ENCODE measurements at regions of chr9 and their contacts with region 1.

Region 1: GRCh38 chr9:115944166-115944948 is 209.2 kb upstream of the PAPPA start:
- DNase-seq: peak; percentile 99
- H3K4me3 ChIP-seq: no peak overlapping the region
- H3K27ac ChIP-seq: peak overlapping the region; percentile 96
- H3K27me3 ChIP-seq: no peaks in the 10 kb centered on the region
- CTCF ChIP-seq: no peak

Region 2: DNA sequence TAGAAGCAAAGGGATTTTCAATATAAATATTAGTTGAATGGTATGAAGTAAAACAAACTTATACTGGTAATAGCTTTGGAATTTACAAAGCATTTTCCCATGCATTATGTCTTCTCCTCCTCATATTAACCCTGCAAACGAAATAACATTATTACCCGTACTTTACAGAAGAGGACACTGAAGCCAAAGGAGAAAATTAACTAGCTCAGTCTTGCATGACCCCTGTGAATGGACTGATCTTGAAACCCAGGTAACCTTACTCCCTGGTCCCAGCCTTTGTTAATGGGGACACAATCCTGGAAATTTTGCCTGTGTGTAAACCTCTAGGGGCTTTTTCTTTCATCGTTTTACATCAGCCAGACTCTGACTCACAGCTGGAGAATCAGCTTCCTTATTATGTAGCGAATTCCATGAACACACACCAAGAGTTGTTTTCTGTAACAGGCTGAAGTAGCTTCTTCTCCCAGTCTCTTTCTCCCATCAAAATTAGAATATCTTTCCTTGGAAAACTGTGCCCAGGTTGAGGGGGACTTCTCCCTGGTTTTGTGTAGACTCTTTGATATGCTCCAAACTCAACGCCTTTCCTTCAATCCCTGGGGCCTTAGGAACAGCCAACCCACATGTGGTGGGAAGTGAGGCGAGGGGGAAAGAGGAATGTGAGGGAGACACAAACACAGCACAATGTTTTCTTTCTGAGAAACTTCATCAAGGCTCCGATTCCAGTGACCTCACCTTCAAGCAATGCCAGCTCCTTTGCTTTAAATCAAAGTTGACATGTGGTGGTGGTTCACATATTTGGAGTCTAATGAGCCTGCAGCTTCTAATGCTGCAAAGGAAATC is 271.7 kb before region 1 on chr9:
- CTCF ChIA-PET with region 1: no interaction called
- POLR2A ChIA-PET with region 1: interaction called, 12 read pairs
- DNase-seq: peak; percentile 96
- H3K4me3 ChIP-seq: peak overlapping the region; percentile 5
- H3K27ac ChIP-seq: peak overlapping the region; percentile 100
- H3K27me3 ChIP-seq: no peaks in the 10 kb centered on the region
- CTCF ChIP-seq: 0 out of 2 replicates have a peak, but pooled peaks have one; percentile 6

Region 3: DNA sequence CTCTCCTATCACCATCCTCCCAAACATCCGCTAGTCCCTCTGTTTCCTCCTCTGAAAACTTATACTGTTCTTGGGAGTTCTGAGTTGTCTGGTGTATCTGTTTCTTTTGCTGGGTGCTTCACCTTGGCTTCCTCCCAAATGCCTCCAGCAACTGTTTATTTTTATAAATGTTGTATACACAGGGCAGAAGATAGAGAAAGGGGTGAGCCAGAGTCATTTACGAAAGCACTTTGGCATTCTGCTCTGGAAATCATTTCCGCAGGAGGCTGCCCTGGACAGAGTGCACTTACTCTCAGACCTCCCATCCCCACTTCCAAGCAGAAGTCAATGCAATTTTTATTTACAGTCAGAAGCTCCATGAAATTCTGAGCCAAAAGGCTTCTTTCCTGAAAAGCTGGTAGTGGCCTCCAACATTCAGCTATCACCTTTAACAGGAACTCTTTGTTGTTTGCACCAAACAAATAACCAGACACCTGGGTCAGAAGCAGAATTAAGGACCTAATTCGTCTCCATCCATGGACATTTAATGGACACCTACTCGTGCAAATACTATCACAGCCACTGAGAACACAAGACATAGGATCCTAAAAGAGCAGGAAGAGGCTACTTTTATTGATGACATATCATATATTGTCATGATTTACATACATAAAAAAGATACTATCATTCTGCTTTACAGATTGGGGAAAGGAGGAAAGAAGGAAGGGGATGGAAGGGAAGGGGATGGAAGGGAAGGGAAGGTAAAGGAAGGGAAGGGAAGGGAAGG is 20.3 kb before region 1 on chr9:
- CTCF ChIA-PET with region 1: no interaction called
- POLR2A ChIA-PET with region 1: interaction called, 10 read pairs
- DNase-seq: peak; percentile 97
- H3K4me3 ChIP-seq: no peak overlapping the region
- H3K27ac ChIP-seq: peak overlapping the region; percentile 47
- H3K27me3 ChIP-seq: no peaks in the 10 kb centered on the region
- CTCF ChIP-seq: no peak

Region 4: DNA sequence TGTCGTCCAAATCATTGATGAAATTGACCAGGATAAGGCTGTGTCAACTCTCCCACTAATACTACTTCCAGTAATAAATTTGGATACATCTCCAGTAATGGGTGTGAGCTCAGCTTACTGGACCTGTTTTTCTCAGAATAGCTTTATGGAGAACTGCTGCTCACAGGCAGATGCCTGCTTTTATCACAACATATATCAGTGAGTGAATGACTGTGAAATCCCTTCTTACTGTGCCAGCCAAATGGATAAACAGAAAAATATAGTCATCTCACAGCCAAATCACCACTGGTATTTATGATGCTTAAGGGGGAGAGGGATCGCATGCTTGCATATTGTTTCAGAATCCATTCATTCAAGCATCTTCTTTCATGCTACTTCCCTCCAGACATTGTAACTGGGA is 60.8 kb after region 1 on chr9:
- CTCF ChIA-PET with region 1: no interaction called
- POLR2A ChIA-PET with region 1: no interaction called
- DNase-seq: no peak
- H3K4me3 ChIP-seq: no peak overlapping the region
- H3K27ac ChIP-seq: no peak overlapping the region
- H3K27me3 ChIP-seq: no peaks in the 10 kb centered on the region
- CTCF ChIP-seq: no peak

Region 5: DNA sequence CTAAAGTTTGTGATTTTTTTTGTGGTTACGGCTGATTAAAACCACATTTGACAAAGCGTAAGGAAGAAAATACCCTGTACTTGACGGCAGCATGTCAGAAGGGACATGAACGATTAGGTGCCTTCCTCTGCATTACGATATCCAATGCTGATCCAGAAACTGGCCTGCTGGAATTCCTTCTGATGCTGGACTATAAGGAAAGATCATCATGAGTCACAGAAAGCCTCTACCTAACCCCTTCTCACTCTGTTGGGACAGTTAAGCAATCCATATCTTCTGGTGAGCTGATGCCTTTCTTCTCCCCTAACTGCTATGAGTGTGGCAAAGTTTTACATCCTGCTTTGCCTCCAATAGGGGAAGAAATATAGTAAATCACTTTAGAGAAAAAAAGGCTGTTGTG is 130.8 kb after region 1 on chr9:
- CTCF ChIA-PET with region 1: no interaction called
- POLR2A ChIA-PET with region 1: interaction called, 11 read pairs
- DNase-seq: peak; percentile 86
- H3K4me3 ChIP-seq: no peak overlapping the region
- H3K27ac ChIP-seq: peak overlapping the region; percentile 32
- H3K27me3 ChIP-seq: no peaks in the 10 kb centered on the region
- CTCF ChIP-seq: no peak

Region 6: DNA sequence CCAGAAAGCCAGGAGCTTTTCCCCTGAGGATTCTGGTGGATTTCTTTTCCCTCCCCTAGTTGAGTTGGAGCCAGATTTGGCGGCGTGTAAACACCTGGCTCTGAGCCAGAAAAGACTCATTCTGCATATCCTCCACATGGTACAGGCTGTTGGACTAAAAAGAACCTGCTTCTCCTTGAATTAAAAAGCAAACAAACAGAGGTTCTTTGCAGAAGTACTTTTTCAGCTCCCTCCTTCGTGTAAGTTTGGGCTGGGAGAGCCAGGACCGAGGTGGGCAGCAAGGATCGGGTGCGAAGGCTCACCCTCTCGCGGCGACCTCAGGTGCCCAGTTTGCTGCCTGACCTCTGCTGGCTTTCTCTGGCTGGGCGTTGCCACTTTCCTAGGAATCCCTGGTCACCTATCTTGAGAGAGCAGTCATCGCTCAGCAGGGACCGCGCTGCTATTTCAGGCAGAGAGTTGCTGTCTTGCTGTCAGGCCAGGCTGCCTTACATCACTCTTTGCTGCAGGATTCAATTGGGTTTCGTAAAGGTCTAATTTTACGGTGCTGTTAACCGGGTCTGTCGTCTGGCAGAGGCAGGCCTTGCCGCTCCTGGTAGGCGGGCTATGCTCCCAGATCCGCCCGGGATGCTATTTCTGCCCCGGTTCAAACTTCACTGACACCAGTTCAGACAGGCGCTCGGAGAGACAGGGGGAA is 212.4 kb after region 1 on chr9:
- CTCF ChIA-PET with region 1: interaction called, 8 read pairs
- POLR2A ChIA-PET with region 1: interaction called, 104 read pairs
- DNase-seq: no peak
- H3K4me3 ChIP-seq: peak overlapping the region; percentile 89
- H3K27ac ChIP-seq: peak overlapping the region; percentile 84
- H3K27me3 ChIP-seq: no peaks in the 10 kb centered on the region
- CTCF ChIP-seq: no peak